ENCODE measurements at regions of chr14 and their contacts with region 1.

Region 1: DNA sequence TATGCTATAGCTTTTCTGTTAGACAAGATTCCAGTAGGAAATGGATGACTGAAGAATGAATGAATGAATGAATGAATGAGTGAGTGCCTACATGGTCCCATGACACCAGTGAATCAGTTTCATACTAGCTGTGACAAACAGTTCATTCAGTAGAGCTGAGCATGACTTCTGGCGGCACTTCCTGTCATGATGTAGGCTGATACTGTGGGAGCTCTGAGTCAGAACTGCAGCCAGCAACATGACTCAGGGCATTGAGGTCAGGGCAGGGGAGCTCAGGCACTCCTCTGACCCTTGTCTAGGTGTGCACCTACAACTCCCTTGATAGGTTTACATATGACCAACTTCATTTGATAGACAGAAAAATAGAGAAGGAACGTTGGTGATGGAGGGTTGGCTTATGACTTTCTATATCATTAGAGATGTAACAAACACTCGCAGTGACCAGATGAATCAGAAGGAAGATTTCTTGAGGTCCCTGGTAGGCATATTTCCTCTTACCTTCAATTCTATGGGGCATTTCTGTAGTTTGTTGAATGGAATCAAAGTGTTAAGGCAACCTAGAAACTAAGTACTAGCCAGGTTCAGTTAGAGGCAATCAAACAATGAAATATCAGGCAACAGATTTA is 139.3 kb upstream of the ARHGAP5 start:
- DNase-seq: peak; percentile 36 to 79 (median 48)
- ATAC-seq: peak; percentile 98
- H3K4me3 ChIP-seq: no peak overlapping the region
- H3K27ac ChIP-seq: peak overlapping the region; percentile 76
- H3K4me1 ChIP-seq: peaks cover 0 to 3% of the 10 kb centered on the region in 2 experiments; a peak in 4 of 5 replicates
- H3K27me3 ChIP-seq: no peaks in the 10 kb centered on the region
- CTCF ChIP-seq: no peak
- EP300 ChIP-seq: peak; percentile 56; the same call in 1 of the 2 replicates
- POLR2A ChIP-seq: no peak
- RAD21 ChIP-seq: peak in 1 of 2 experiments; percentile 17; a peak in 2 of 4 replicates

Region 2: DNA sequence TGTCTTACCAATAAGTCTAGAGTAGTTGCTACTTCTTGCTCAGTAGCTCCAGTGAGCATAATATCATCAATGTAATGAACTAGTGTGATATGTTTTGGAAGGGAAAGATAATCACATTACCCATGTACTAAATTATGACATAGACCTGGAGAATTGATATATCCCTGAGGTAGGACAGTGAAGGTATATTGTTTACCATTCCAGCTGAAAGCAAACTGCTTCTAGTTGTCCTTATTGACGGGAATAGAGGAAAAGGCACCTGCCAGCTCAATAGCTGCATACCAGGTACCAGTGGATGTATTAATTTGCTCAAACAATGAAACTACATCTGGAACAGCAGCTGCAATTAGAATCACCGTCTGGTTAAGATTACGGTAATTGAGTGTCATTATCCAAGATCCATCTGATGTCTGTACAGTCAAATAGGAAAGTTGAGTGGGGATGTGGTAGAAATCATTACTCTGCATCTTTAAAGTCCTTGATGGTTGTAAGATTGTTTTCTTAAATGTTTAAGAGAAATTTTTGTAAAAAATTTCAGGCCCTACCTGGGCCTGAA is 39.2 kb after region 1 on chr14:
- CTCF ChIA-PET with region 1: no interaction called
- POLR2A ChIA-PET with region 1: no interaction called
- in situ Hi-C with region 1: no loop called
- intact Hi-C with region 1: no loop called
- DNase-seq: no peak
- ATAC-seq: no peak
- H3K4me3 ChIP-seq: no peak overlapping the region
- H3K27ac ChIP-seq: no peak overlapping the region
- H3K4me1 ChIP-seq: no peaks in the 10 kb centered on the region
- H3K27me3 ChIP-seq: no peaks in the 10 kb centered on the region
- CTCF ChIP-seq: no peak
- EP300 ChIP-seq: no peak
- POLR2A ChIP-seq: no peak
- RAD21 ChIP-seq: no peak

Region 3: GRCh38 chr14:32476532-32476931 is 538.7 kb after region 1 on chr14:
- CTCF ChIA-PET with region 1: no interaction called
- POLR2A ChIA-PET with region 1: no interaction called
- in situ Hi-C with region 1: no loop called
- intact Hi-C with region 1: no loop called
- DNase-seq: no peak
- ATAC-seq: no peak
- H3K4me3 ChIP-seq: no peak overlapping the region
- H3K27ac ChIP-seq: no peak overlapping the region
- H3K4me1 ChIP-seq: no peaks in the 10 kb centered on the region
- H3K27me3 ChIP-seq: peaks cover 0 to 5% of the 10 kb centered on the region in 2 experiments; a peak in 2 of 5 replicates
- CTCF ChIP-seq: no peak
- EP300 ChIP-seq: no peak
- POLR2A ChIP-seq: no peak
- RAD21 ChIP-seq: no peak

Region 4: DNA sequence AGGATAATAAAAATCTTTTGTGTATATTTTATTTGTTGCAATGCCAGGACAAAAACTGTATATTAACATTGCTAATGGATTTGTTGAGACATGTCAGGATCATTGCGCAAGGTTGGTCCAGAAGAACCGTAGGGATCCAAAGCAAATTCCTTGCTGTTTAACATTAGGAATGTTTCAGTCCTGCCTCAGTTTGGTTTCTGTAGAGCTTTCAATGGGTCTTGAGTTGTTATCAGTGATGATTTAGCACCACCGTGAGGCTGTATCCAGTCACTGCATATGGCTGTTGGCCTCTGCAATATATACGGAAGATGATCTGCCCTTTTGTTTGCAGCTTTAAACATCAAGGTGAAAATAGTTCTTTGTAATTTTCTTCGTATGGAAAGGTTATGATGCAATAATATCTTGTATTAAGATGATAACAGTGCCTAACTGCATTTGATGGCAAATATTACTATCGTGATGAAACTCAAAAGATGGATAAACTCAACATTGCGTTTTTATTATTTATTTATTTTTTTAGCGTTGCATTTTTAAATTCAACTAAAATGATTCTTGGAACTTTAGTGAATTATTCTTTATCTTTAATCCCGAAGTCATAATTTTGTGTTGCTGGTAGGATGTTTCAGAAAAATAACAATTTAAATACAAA is 622.5 kb after region 1 on chr14:
- CTCF ChIA-PET with region 1: no interaction called
- POLR2A ChIA-PET with region 1: no interaction called
- in situ Hi-C with region 1: no loop called
- intact Hi-C with region 1: loop called (anchors 10 kb)
- DNase-seq: peak; percentile 40 to 56 (median 44)
- ATAC-seq: peak; percentile 76
- H3K4me3 ChIP-seq: no peak overlapping the region
- H3K27ac ChIP-seq: no peak overlapping the region
- H3K4me1 ChIP-seq: no peaks in the 10 kb centered on the region
- H3K27me3 ChIP-seq: no peaks in the 10 kb centered on the region
- CTCF ChIP-seq: peak; percentile 59 to 78 (median 68)
- EP300 ChIP-seq: no peak
- POLR2A ChIP-seq: no peak
- RAD21 ChIP-seq: peak; percentile 73 to 74

Measured in K562 (cell line).